Activated B cell treated with CpG ODN at 0.5 μM for 24 hours (primary cell): ENCODE measurements at regions of chr2 and their contacts with region 1.

Region 1: GRCh38 chr2:171687287-171688128 is at the start of gene DYNC1I2:
- DNase-seq: peak; percentile 70
- ATAC-seq: peak; percentile 87
- H3K4me3 Mint-ChIP-seq: peak within 1 kb of the TSS; percentile 95
- H3K27ac Mint-ChIP-seq: peak within 1 kb of the TSS; percentile 88
- H3K4me1 Mint-ChIP-seq: peaks cover 17% of the 10 kb centered on the region
- H3K27me3 Mint-ChIP-seq: peaks cover 2% of the 10 kb centered on the region
- CTCF ChIP-seq: no peak
- total RNA-seq, gene DYNC1I2: 52.0 and 54.6 TPM in 2 replicates

Region 2: DNA sequence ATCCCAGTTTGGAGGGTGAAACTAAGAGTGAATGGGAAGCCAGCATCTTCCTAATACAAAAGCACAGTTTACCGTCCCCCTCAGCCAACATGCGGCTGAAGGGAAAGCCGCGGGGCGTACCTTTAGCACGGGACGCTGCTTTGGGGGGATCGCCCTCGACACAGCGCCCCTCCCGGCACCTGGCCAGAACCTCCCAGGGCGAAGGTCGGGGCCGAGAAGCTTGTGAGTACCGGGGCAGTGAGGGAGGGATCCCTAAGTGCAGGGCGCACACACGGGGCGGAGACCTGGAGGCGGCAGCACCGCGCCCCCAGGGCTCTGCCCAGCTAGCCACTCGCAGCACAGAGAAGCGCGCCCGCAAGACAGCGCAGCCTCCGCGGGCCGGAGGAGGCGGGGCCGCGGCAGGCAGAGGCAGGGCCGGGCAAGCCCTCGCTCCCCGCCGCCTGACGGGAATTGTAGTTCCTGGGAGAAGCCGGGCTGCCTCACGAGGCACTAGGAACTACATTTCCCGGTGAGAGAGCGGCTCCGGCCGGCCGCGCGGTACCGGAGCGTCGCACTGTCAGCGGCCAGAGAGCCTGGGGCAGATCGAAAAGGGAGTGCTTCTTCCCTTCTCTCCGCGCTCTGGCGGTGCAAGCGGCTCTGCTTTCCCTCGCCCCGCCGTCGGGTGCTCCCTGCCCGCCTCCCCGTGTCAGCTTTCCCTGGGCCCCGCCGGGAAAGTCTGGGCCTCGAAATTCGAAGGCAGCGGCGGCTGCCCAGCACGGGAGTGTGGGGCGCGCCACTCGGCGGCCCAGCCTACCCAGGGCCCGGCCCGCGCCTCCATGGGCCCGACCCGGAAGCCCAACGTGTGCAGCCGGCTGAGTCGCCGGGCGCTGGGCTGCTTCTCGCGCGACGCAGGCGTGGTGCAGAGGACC is 253.5 kb before region 1 on chr2 and contains the starts of genes DCAF17 and METTL8:
- CTCF ChIA-PET with region 1: no interaction called
- POLR2A ChIA-PET with region 1: no interaction called
- intact Hi-C with region 1: loop called (anchors 1 kb)
- DNase-seq: peak; percentile 91
- ATAC-seq: peak; percentile 92
- H3K4me3 Mint-ChIP-seq: peak within 1 kb of the TSS; percentile 90
- H3K27ac Mint-ChIP-seq: peak within 1 kb of the TSS; percentile 94
- H3K4me1 Mint-ChIP-seq: peaks cover 24% of the 10 kb centered on the region
- H3K27me3 Mint-ChIP-seq: no peaks in the 10 kb centered on the region
- CTCF ChIP-seq: no peak
- total RNA-seq, gene DCAF17: 23.1 and 23.5 TPM in 2 replicates
- total RNA-seq, gene METTL8: 16.5 and 22.9 TPM in 2 replicates

Region 3: GRCh38 chr2:171583566-171583965 is 103.9 kb before region 1 on chr2:
- CTCF ChIA-PET with region 1: no interaction called
- POLR2A ChIA-PET with region 1: no interaction called
- intact Hi-C with region 1: no loop called
- DNase-seq: no peak
- ATAC-seq: no peak
- H3K4me3 Mint-ChIP-seq: no peak overlapping the region
- H3K27ac Mint-ChIP-seq: no peak overlapping the region
- H3K4me1 Mint-ChIP-seq: no peaks in the 10 kb centered on the region
- H3K27me3 Mint-ChIP-seq: peaks cover 15% of the 10 kb centered on the region
- CTCF ChIP-seq: no peak

Region 4: GRCh38 chr2:171703574-171704347 is 16.3 kb after region 1 on chr2:
- CTCF ChIA-PET with region 1: interaction called, 12 read pairs
- POLR2A ChIA-PET with region 1: interaction called, 3 read pairs
- intact Hi-C with region 1: no loop called
- DNase-seq: no peak
- ATAC-seq: no peak
- H3K4me3 Mint-ChIP-seq: no peak overlapping the region
- H3K27ac Mint-ChIP-seq: no peak overlapping the region
- H3K4me1 Mint-ChIP-seq: peaks cover 18% of the 10 kb centered on the region
- H3K27me3 Mint-ChIP-seq: no peaks in the 10 kb centered on the region
- CTCF ChIP-seq: no peak

Region 5: DNA sequence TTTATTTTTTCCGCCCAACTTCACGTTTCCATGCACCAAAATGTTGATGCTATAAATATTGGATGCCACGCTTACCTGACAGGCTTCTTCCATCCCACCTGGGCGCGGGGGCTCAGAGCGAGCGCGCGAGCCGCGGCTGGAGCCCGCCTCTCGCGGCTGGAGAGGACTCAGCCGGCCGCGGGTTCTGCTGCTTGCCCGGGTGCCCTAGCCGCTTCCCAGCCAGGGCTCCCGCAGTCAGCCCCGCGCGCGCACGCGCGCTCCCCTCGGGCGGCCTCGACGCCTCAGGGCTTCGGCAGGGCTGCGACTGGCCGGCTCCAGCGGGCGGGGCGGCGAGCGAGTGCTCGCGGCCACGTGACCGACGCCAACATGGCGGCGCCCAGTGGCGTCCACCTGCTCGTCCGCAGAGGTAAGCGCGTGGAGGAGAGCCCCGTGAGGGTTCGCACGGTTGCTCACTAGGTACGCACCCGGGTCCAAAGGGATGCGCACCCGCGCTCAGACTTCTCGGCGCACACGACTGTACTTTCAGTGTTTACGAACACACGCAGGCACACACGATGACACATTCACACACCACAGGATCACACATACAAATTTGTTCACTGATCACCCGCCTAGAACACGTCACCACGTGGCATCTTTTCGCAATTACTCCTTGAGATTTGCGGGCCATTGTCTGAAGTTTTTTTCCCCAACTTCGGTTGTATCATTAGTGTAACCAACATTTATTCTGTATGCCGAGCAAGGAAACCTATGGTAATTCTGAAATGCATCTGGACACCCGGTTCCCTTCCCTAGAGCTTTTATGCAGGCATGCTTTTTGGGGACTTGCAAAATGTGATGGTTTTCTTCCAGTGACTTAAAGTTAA is 312.3 kb after region 1 on chr2 and contains the start of gene METAP1D:
- CTCF ChIA-PET with region 1: no interaction called
- POLR2A ChIA-PET with region 1: no interaction called
- intact Hi-C with region 1: loop called (anchors 2 kb)
- DNase-seq: peak; percentile 86
- ATAC-seq: peak; percentile 96
- H3K4me3 Mint-ChIP-seq: peak within 1 kb of the TSS; percentile 95
- H3K27ac Mint-ChIP-seq: peak within 1 kb of the TSS; percentile 96
- H3K4me1 Mint-ChIP-seq: peaks cover 21% of the 10 kb centered on the region
- H3K27me3 Mint-ChIP-seq: peaks cover 4% of the 10 kb centered on the region
- CTCF ChIP-seq: no peak
- total RNA-seq, gene METAP1D: 7.7 and 13.7 TPM in 2 replicates